Activated CD4-positive, alpha-beta memory T cell treated with anti-CD3 and anti-CD28 coated beads for 36 hours (primary cell): ENCODE measurements at regions of chr1 and their contacts with region 1.

Region 1: DNA sequence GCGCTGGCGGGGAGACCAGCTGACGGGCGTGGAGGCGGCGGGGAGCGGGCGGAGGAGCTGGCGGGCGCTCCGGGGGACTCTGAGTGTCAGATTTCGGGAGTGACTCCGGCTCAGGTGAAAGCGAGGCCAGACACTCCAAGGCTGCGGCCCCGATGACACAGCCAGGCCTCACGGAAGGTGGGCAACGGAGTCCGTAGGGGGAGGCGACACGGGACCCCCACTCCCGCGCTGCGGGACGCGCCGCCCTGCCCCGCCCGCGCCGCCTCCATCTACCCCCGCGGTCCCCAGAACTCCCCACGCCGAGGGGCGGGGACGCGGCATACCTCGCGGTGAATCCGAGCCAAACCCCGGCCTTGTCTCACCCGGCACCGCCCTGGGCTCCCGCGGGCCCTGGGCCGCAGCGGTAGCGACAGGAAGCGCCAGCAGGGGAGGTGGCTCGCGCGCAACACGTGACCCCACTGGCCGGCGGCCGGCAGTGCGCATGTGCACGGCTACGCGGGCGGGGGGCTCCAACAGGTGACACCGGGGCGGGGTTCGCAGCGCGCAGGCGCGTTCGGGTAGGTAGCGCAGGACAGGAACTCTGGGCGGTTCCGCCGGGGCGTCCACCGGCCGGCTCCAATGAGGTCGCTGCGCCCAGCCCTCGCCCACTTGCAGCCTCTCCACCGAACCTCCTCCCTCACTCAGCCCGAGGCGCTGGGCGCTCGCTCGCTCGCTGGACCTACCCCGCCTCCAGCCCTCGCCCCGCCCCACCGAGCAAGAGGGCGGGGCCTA is at the start of gene CC2D1B:
- DNase-seq: peak; percentile 100
- H3K4me3 Mint-ChIP-seq: peak within 1 kb of the TSS; percentile 84
- H3K27ac Mint-ChIP-seq: peak within 1 kb of the TSS; percentile 89
- H3K4me1 Mint-ChIP-seq: peaks cover 47% of the 10 kb centered on the region
- H3K27me3 Mint-ChIP-seq: no peaks in the 10 kb centered on the region
- total RNA-seq, gene CC2D1B: 27.1 to 33.1 TPM

Region 2: GRCh38 chr1:52056163-52056936 is 309.6 kb before region 1 on chr1 and contains the start of gene BTF3L4:
- CTCF ChIA-PET with region 1: no interaction called
- POLR2A ChIA-PET with region 1: no interaction called
- intact Hi-C with region 1: loop called (anchors 1 kb)
- DNase-seq: peak; percentile 97
- H3K4me3 Mint-ChIP-seq: peak within 1 kb of the TSS; percentile 94
- H3K27ac Mint-ChIP-seq: peak within 1 kb of the TSS; percentile 98
- H3K4me1 Mint-ChIP-seq: peaks cover 53% of the 10 kb centered on the region
- H3K27me3 Mint-ChIP-seq: no peaks in the 10 kb centered on the region
- total RNA-seq, gene BTF3L4: 32.5 to 35.2 TPM

Region 3: GRCh38 chr1:52141513-52142219 is 224.3 kb before region 1 on chr1 and contains the start of gene ZFYVE9:
- CTCF ChIA-PET with region 1: interaction called, 3 read pairs
- POLR2A ChIA-PET with region 1: no interaction called
- intact Hi-C with region 1: loop called (anchors 1 kb)
- DNase-seq: peak; percentile 75
- H3K4me3 Mint-ChIP-seq: peak within 1 kb of the TSS; percentile 80
- H3K27ac Mint-ChIP-seq: no peak within 1 kb of the TSS
- H3K4me1 Mint-ChIP-seq: peaks cover 39% of the 10 kb centered on the region
- H3K27me3 Mint-ChIP-seq: peaks cover 3% of the 10 kb centered on the region
- total RNA-seq, gene ZFYVE9: 2.6 to 2.9 TPM

Region 4: DNA sequence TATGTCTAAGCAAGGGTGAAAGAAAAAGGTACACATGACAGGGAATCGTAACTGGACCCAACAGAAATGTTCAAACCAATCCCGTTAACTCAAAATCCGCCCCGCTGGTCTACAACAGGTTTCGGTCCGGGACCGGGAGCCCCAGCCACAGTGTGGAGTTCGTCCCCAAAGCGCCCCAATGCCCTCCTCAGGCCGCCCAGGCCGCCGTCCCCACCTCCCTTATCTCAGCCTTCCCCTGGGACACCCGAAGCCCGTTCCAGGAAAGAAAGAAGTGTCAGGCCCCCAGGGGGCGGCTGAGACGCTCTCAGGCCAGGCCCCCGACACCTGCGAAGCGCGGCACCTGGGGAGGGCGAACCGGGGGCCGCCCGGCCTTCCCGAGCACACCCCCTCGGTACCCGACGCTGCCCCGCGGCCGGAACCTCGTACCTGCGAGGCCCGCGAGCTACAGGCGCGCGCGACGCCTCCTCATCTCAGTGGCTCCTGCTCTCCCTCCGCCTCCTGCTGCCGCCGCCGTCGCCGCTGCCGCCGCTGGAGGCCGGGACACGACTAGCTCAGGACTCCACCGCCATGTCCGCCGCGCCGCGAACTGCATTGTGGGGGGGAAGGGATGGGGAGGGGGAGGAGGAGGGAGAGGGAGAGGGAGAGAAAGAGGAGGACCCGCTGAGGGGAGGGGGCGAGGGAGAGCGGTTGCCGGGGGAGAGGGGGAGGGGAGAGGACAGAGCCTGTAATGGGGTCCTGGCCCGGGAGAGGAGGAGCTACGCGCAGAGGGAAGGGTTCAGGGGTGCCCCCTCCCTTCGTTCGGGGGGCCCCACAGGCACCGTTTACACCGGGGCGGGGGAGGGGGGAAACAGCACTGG is 186.8 kb after region 1 on chr1 and contains the start of gene TUT4:
- CTCF ChIA-PET with region 1: no interaction called
- POLR2A ChIA-PET with region 1: no interaction called
- intact Hi-C with region 1: loop called (anchors 1 kb)
- DNase-seq: peak; percentile 87
- H3K4me3 Mint-ChIP-seq: peak within 1 kb of the TSS; percentile 63
- H3K27ac Mint-ChIP-seq: no peak within 1 kb of the TSS
- H3K4me1 Mint-ChIP-seq: peaks cover 32% of the 10 kb centered on the region
- H3K27me3 Mint-ChIP-seq: no peaks in the 10 kb centered on the region
- total RNA-seq, gene TUT4: 54.6 to 62.1 TPM

Region 5: DNA sequence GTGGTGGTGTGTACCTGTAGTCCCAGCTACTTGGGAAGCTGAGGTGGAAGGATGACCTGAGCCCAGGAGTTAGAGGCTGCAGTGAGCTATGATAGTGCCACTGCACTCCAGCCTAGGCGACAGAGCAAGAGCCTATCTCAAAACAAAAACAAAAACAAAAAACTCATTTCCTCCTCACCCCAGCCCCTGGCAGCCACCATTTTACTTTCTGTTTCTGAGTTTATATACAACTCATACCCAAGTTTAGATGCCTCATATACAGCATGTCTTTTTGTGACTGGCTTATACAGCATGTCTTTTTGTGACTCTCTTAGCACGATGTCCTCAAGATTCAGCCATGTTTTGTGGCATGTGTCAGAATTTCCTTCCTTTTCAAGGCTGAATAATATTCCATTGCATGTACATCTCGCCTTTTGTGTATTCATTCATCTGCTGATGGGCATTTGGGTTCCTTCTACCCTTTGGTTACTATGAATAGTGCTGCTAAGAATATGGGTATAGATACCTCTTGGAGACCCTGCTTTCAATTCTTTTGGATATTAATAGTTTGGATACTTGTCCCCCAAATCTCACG is 317.5 kb after region 1 on chr1:
- CTCF ChIA-PET with region 1: interaction called, 7 read pairs
- POLR2A ChIA-PET with region 1: no interaction called
- intact Hi-C with region 1: loop called (anchors 5 kb)
- DNase-seq: no peak
- H3K4me3 Mint-ChIP-seq: no peak overlapping the region
- H3K27ac Mint-ChIP-seq: peak overlapping the region; percentile 28
- H3K4me1 Mint-ChIP-seq: peaks cover 6% of the 10 kb centered on the region
- H3K27me3 Mint-ChIP-seq: no peaks in the 10 kb centered on the region

Region 6: DNA sequence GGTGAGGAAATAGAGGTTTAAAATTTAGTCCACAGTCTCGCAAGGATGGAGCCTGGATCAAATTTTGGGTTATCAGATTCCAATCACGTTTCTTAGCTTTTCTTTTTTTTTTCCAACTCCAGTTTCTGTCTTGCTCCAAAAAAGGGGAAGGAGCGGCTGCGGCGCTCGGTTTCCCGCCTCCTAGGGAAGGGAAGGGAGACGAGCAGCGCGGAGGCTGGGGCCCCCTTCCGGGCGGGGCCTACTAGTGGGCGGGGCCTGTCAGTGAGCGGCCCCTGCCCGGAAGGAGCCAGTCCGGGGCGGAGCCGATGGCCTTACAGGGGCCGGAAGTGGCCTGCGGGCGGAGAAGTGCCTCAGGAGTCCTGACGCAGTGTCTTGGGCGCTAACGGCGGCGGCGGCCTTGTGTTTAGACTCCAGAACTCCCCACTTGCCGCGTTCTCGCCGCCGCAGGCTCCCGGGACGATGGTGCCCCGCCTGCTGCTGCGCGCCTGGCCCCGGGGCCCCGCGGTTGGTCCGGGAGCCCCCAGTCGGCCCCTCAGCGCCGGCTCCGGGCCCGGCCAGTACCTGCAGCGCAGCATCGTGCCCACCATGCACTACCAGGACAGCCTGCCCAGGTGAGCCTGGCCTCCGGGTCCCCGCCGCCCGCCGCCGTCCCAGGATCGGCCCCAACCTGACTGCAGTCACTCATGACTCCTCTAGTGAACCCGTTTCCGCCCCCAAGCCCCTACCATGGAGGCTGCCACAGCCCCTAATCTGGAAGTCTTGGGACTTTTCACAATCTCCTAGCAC is 830.7 kb after region 1 on chr1 and contains the start of gene CPT2:
- CTCF ChIA-PET with region 1: no interaction called
- POLR2A ChIA-PET with region 1: no interaction called
- intact Hi-C with region 1: loop called (anchors 10 kb)
- DNase-seq: peak; percentile 95
- H3K4me3 Mint-ChIP-seq: peak within 1 kb of the TSS; percentile 97
- H3K27ac Mint-ChIP-seq: peak within 1 kb of the TSS; percentile 98
- H3K4me1 Mint-ChIP-seq: peaks cover 16% of the 10 kb centered on the region
- H3K27me3 Mint-ChIP-seq: no peaks in the 10 kb centered on the region
- total RNA-seq, gene CPT2: 19.6 to 20.7 TPM